ENCODE measurements at regions of chr1 and their contacts with region 1.

Region 1: DNA sequence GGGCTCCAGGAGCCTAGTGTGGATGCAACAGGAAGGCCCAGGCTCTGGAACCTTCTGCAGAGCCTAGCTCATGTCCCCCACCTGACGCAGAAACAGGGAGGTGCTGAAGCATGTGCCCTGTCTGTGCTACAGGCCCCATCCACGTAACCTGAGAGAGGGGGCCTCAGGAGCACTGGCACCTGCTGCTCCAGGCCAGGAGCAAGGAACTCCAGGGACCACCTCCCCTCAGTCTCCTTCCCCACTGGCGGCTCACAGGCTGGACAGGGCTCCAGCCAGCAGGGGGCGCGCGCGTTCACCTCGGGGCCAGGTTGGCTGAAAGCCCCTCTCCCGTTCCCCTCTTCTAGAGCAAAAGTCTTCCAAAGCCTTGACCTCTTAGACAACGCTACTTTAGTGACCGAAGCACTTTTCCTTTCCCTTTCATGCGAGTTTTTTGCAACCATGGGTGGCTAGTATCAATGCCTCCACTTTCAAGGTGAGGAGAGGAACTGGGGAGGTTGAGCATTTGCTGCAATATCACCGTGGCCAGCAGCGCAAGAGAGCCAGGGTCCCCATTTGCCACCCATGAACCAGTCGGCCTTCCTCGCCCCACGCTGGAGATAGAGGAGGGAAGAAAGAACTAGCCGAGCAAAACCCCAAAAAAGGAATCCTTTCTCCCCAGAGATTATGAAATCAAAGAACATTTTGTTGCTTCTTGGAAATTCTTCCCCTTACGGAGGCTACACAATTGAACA is 52.4 kb upstream of the GPR157 start:
- DNase-seq: peak; percentile 74
- H3K4me3 ChIP-seq: peak overlapping the region; percentile 66 to 79 (median 76)
- H3K27ac ChIP-seq: peak overlapping the region; percentile 69
- H3K4me1 ChIP-seq: peaks cover 22% of the 10 kb centered on the region
- H3K27me3 ChIP-seq: no peaks in the 10 kb centered on the region
- CTCF ChIP-seq: peak; percentile 98 to 99
- POLR2A ChIP-seq: no peak

Region 2: DNA sequence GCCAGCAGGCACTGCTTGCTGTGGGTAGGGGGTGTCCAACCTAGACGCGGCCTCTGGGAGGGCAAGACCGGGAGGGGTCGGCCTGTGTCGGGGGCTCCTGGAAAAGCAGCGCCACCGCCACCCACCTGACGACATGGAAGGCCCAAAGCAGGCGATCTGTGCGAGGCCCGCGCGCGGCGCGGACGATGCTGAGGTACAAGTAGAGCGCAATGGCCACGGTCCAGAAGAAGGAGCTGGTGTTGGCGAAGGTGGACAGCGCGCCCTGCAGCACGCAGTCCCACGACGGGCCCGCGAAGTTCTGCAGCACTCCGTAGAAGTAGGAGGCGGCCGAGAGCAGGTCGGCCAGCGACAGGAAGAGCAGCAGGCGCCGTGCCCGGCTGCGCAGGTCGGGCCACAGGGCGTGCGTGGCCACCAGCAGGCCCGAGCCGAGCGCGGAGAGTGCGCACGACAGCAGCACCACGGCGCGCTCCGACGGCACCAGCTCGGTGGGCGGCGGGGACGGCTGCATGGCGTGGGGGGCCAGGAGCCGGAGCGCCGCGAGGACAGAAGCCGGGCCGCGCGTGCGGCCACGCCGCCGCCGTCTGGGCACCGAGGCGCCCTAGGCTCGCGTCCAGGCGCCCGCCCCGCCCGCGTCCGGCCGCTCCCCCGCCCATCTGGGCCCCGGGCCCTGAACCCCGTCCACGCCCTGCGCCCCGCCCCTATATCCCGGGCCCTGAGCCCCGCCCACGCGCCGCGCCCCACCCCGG is 52.6 kb before region 1 on chr1 and contains the start of gene GPR157:
- CTCF ChIA-PET with region 1: interaction called, 3 read pairs
- POLR2A ChIA-PET with region 1: no interaction called
- dilution Hi-C with region 1: no loop called
- intact Hi-C with region 1: loop called (anchors 5 kb)
- DNase-seq: peak; percentile 70
- H3K4me3 ChIP-seq: peak within 1 kb of the TSS; percentile 34 to 49 (median 36)
- H3K27ac ChIP-seq: no peak within 1 kb of the TSS
- H3K4me1 ChIP-seq: peaks cover 8% of the 10 kb centered on the region
- H3K27me3 ChIP-seq: no peaks in the 10 kb centered on the region
- CTCF ChIP-seq: peak in 1 of 2 donors; percentile 19
- POLR2A ChIP-seq: peak; percentile 78
- total RNA-seq, gene GPR157: 5.2 and 6.5 TPM in 2 replicates

Region 3: DNA sequence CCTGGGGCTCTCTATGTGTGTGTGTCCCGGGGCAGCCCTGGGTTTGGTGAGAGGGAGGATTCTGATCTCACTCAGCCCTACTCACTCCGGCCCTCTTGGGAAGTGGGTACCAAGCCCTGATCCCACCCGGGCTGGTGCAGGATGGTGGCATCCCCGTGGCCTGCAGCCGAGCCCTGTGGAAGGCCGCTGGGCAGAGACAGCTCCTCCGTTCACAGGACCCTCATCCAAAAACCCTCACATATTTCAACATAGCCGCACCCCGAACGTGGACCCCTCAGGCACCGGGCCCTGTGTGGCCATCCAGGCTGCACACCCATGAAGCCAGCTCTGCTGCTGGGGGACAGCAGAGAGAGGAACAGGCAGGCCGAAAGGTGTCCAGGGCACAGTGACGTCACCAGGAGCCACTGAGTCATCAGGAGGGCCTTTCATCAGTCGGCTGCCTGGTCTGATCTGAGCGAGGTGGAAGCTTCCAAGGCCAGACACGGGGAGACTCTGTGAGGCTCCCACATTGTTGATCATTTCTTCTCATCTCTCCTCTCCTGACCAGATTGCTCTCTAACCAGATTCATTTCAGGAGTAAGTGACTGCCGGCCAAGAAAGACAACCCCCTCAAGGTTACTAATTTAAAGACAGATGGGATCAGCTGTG is 36.2 kb before region 1 on chr1:
- CTCF ChIA-PET with region 1: interaction called, 14 read pairs
- POLR2A ChIA-PET with region 1: interaction called, 8 read pairs
- dilution Hi-C with region 1: no loop called
- intact Hi-C with region 1: loop called (anchors 5 kb)
- DNase-seq: no peak
- H3K4me3 ChIP-seq: no peak overlapping the region
- H3K27ac ChIP-seq: no peak overlapping the region
- H3K4me1 ChIP-seq: peaks cover 9% of the 10 kb centered on the region
- H3K27me3 ChIP-seq: no peaks in the 10 kb centered on the region
- CTCF ChIP-seq: no peak
- POLR2A ChIP-seq: no peak

Region 4: GRCh38 chr1:9166289-9167235 is 14.8 kb before region 1 on chr1:
- CTCF ChIA-PET with region 1: interaction called, 23 read pairs
- POLR2A ChIA-PET with region 1: interaction called, 3 read pairs
- dilution Hi-C with region 1: no loop called
- intact Hi-C with region 1: loop called (anchors 1 kb)
- DNase-seq: peak; percentile 69
- H3K4me3 ChIP-seq: no peak overlapping the region
- H3K27ac ChIP-seq: peak overlapping the region; percentile 99
- H3K4me1 ChIP-seq: peaks cover 39% of the 10 kb centered on the region
- H3K27me3 ChIP-seq: no peaks in the 10 kb centered on the region
- CTCF ChIP-seq: no peak
- POLR2A ChIP-seq: no peak

Region 5: DNA sequence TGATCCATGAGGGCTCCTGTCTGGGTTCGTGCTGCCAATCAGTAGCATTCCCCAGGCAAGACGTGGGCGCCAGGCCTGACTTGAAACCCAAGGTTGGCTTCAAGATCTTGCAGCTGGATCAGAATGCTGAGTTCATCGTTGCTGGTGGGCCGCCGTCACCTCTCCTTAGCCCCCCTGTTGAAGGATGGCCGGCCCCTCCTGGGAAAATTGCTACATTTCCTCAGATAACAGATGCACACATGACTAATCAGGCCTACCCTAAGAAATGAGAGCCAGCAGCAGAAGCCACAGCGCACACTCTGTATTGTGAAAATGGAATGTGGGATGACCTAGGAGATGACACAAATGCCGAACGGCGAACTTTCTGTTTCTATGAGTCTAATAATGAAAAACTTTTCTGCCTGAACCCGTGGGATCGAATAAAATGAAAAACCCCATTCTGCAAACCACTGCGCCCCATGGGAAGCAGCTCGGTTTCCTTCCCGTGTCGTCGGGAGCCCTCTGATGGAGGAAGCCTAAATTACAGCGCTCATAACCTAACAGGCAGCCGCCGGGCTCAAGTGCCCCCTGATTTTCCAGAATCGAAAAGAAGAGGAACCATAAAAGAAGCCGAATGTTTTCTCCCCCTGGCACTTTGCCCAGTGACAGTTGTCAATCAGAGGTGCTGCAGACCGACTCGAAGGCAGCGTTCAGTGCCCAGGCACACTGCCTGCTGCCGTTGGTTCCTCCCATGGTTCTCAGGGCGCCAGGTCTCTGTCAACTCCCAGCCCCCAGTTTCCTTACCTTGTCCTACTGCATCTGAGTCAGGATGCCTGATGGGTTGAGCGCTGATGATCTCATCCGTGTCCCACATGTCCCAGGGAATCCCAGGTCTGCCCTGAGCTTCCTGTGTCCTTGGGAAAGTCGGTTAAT is 15.0 kb after region 1 on chr1:
- CTCF ChIA-PET with region 1: interaction called, 24 read pairs
- POLR2A ChIA-PET with region 1: no interaction called
- dilution Hi-C with region 1: no loop called
- intact Hi-C with region 1: loop called (anchors 1 kb)
- DNase-seq: peak; percentile 66
- H3K4me3 ChIP-seq: no peak overlapping the region
- H3K27ac ChIP-seq: no peak overlapping the region
- H3K4me1 ChIP-seq: peaks cover 14% of the 10 kb centered on the region
- H3K27me3 ChIP-seq: peaks cover 2 to 5% of the 10 kb centered on the region in 2 experiments
- CTCF ChIP-seq: peak; percentile 74 to 75
- POLR2A ChIP-seq: no peak

Region 6: DNA sequence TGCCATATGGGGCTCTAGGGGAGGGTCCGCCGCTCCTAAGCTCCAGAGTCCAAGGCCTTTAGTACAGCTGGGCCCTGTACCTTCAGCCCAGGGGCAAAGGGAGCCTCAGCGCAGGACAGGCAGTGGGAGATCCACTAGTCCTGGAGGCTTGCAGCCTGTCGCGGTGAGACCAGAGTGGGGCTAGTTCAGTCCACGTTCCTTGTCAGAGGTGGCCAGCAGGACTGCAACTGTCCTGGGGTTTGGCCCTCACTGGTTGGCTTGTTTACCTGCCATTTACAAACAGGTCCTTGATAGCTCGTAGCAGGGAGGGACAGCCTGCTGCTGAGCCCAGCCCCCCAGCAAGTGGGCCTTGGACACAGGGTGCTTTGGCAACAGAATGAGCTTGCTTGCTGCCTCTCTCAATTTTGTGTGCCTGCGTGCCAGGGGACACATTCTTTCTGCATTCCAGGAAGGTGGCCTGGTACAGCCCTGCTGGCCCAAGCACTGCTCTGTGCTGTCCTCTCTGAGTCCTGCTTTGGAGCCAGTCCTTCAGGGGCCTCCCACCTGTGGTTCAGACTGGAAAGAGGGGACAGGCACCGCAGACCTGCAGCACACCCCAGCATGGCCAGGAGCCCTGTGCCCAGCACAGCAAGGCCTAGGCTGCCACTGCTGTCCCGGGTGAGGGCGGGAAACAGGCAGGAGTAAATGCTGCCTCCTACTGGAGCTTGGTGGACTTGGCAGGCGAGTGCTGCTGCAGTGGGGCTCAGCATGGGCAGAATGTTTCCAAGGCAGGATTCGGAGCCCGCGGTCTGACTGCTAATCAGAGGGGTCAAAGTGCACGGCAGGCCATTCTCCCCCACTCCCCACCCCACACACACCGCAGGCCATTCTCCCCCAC is 68.4 kb after region 1 on chr1:
- CTCF ChIA-PET with region 1: interaction called, 7 read pairs
- POLR2A ChIA-PET with region 1: no interaction called
- dilution Hi-C with region 1: no loop called
- intact Hi-C with region 1: loop called (anchors 1 kb)
- DNase-seq: peak; percentile 41
- H3K4me3 ChIP-seq: no peak overlapping the region
- H3K27ac ChIP-seq: no peak overlapping the region
- H3K4me1 ChIP-seq: no peaks in the 10 kb centered on the region
- H3K27me3 ChIP-seq: no peaks in the 10 kb centered on the region
- CTCF ChIP-seq: peak; percentile 61 to 77
- POLR2A ChIP-seq: no peak

Measured in endothelial cell of umbilical vein (primary cell).